PC-9 (cell line): ENCODE measurements at regions of chr20 and their contacts with region 1.

Region 1: DNA sequence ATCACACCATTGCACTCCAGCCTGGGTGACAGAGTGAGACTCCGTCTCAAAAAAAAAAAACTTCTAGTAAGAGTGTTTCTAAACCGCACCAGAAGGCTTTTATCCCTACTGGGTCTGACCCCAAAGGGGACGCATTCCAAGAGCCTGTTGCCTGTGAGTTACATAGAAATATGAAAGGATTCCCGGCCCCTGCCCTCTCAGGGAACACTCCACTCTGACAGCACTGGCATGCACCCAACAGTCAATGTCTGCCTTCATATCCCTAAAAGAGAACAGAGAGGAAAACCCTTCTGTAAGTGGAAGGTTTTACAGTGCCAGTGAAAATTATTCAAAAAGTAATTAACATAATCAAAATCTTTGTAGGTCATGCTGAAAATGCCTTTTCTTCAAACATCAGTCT is 117.1 kb upstream of the PTPRT start:
- DNase-seq: no peak
- H3K4me3 ChIP-seq: no peak overlapping the region
- H3K27ac ChIP-seq: no peak overlapping the region
- H3K4me1 ChIP-seq: no peaks in the 10 kb centered on the region
- H3K27me3 ChIP-seq: peaks cover 17% of the 10 kb centered on the region
- CTCF ChIP-seq: no peak

Region 2: DNA sequence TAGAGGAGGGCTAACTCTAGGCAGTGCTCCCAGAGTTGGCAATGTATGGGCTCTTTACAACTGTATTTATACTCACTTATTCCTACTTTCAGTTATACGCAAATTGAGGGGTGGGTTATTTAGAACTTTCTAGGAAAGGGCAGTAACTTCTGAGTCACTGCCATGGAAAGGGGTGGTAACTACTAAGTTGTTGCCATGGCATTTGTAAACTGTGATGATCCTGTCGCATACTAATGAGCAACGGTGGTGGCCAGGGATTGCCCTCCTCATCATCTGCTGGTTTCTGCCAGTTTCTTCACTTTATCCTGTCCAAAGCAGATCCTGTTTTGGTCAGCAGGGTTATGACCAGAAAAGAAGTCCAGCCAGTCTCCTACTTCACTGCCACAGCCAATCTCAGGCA is 21.7 kb before region 1 on chr20:
- CTCF ChIA-PET with region 1: no interaction called
- POLR2A ChIA-PET with region 1: interaction called, 15 read pairs
- intact Hi-C with region 1: no loop called
- DNase-seq: no peak
- H3K4me3 ChIP-seq: no peak overlapping the region
- H3K27ac ChIP-seq: no peak overlapping the region
- H3K4me1 ChIP-seq: no peaks in the 10 kb centered on the region
- H3K27me3 ChIP-seq: peaks cover 67% of the 10 kb centered on the region; the same call in 1 of the 2 replicates
- CTCF ChIP-seq: no peak

Region 3: GRCh38 chr20:43337036-43337435 is 30.2 kb after region 1 on chr20:
- CTCF ChIA-PET with region 1: no interaction called
- POLR2A ChIA-PET with region 1: no interaction called
- intact Hi-C with region 1: no loop called
- DNase-seq: no peak
- H3K4me3 ChIP-seq: no peak overlapping the region
- H3K27ac ChIP-seq: no peak overlapping the region
- H3K4me1 ChIP-seq: no peaks in the 10 kb centered on the region
- H3K27me3 ChIP-seq: peaks cover 72% of the 10 kb centered on the region
- CTCF ChIP-seq: no peak